MCF 10A (cell line): ENCODE measurements at regions of chr16 and their contacts with region 1.

Region 1: DNA sequence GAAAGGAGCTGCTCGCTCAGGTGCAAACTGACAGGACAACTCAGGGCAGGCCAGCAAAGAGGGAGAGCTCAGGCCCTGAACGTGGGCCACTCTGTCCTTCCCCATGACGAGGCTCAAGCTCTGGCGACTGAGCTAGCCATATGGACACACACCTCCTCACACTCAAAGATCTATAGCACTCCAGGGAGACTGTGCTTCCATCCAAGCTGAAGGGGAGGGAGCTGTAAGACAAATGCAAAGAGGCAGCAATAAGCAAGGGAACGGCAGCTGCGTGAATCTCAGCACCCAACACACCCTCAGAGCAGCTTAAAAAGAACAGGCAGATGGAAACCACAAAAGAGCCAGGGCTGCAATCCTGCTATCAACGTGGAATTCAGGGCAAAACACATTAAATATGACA is 13.5 kb downstream of the NUDT16L1 start:
- DNase-seq: no peak
- H3K4me3 Mint-ChIP-seq: no peak overlapping the region
- H3K27ac Mint-ChIP-seq: no peak overlapping the region
- H3K4me1 Mint-ChIP-seq: no peaks in the 10 kb centered on the region
- H3K27me3 Mint-ChIP-seq: no peaks in the 10 kb centered on the region
- CTCF ChIP-seq: no peak

Region 2: DNA sequence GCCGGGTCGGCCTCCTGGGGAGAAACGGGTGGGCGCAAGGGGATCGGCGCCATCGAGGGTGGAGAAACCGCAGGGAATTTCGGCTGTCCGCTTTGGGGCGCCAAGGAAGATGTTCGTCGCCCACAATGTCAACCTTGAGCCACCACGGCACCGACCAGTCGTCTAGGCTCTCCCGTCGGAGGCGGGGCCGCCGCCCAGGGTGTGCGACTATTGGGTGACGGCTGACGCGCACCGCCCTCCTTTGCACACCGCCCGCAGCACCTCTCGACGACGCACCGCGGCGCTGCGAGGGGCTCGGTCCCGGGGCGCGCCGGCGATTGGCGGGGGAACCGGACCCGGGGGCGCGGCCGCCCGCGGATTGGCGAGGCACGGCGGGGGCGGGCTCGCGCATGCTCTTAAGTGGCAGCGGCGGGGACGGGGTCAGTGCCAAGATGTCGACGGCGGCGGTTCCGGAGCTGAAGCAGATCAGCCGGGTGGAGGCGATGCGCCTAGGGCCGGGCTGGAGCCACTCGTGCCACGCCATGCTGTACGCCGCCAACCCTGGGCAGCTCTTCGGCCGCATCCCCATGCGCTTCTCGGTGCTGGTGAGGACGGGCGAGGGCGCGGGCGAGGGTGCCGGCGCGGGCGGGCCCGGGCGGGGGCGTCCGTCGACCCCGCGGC is 13.4 kb before region 1 on chr16 and contains the start of gene NUDT16L1:
- CTCF ChIA-PET with region 1: no interaction called
- POLR2A ChIA-PET with region 1: interaction called, 12 read pairs
- intact Hi-C with region 1: no loop called
- DNase-seq: peak; percentile 94
- H3K4me3 Mint-ChIP-seq: peak within 1 kb of the TSS; percentile 75
- H3K27ac Mint-ChIP-seq: peak within 1 kb of the TSS; percentile 66
- H3K4me1 Mint-ChIP-seq: peaks cover 5% of the 10 kb centered on the region
- H3K27me3 Mint-ChIP-seq: no peaks in the 10 kb centered on the region
- CTCF ChIP-seq: no peak
- total RNA-seq, gene NUDT16L1: 18.3 and 21.8 TPM in 2 replicates